ENCODE measurements at regions of chr11 and their contacts with region 1.

Region 1: DNA sequence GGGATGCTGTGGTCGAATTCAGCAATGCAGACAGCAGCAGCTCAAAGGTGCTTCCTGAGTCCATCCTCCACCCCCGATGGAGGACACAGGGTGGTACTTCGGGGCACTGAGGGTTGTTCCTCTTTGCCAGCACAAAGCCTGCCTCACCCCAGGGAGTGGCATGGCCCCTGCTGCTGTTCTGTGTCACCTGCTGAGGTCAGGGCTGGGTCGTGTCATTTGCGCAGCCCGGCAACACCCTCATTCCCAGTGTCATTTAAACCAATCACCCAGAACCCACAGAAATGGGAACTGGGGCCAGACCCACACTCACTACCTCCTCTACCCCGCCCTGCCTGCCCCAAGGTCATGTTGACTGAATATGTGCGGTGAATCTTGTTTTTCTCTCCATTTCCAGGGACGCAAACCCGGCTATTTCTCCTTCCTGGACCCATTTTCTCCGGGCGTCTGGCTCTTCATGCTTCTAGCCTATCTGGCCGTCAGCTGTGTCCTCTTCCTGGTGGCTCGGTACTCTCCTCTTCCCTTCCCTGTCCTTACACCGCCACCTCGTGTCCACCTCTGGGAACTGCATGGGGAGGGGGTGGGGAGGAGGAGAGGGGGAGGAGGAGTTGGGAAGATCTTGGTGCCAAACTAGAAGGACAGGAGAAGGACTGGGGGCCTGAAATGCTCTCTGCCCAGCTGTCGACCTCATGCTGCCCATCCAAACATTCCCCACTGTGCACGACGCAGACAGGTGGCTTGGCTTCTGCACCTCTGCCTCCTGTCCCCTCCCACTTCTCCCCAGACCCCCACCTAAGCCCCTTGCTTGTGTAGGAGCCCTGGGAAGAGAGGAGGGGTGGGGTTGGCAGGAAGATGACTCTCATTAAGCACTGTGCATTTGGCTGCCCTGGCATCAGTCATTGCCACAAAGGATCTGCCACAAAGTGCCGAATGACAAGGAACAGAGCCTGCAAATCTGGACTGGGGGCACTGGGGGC is 71.2 kb upstream of the TBCEL start:
- DNase-seq: peak; percentile 94
- ATAC-seq: peak; percentile 84
- H3K4me3 Mint-ChIP-seq: no peak overlapping the region
- H3K27ac Mint-ChIP-seq: no peak overlapping the region
- H3K4me1 Mint-ChIP-seq: peaks cover 40% of the 10 kb centered on the region
- H3K27me3 Mint-ChIP-seq: no peaks in the 10 kb centered on the region
- CTCF ChIP-seq: peak; percentile 71

Region 2: GRCh38 chr11:120832481-120833238 is 120.1 kb before region 1 on chr11:
- CTCF ChIA-PET with region 1: interaction called, 10 read pairs
- POLR2A ChIA-PET with region 1: no interaction called
- DNase-seq: no peak
- ATAC-seq: peak; percentile 46
- H3K4me3 Mint-ChIP-seq: no peak overlapping the region
- H3K27ac Mint-ChIP-seq: no peak overlapping the region
- H3K4me1 Mint-ChIP-seq: peaks cover 10% of the 10 kb centered on the region
- H3K27me3 Mint-ChIP-seq: no peaks in the 10 kb centered on the region
- CTCF ChIP-seq: no peak

Region 3: DNA sequence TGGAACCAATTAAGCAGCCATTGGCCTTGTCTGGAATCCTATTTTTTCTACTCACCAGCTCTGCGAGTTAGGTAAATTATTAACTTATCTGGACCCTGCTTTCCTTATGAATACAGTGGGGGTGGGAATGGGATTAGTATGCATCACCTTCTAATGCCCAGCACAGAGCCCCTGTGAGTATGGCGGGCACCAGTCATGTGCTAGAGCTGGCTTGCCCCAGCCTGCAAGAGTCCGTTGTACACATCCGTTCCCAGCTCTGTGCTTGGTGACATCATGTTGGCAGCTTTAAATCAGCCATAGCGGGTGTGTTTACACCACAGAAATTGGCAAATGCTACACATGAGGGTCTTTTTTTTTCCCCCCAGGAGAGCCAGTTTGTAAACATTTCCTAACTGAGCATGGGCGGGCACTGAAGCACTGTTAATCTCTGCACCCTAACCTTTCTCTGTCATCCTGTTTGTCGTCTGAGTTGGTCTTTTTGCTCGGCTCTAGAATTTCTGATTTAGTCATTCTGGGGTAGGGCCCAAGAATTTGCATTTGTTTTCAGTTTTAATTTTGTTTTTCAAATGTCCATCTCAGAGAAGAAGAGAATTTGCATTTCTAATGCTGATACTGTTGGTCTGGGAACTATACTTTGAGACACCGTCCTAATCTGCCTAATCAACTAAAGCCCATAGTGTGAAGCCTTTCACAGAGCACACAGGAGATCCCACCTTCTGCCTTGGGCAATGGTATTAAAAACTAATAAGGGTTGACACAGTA is 59.1 kb before region 1 on chr11:
- CTCF ChIA-PET with region 1: no interaction called
- POLR2A ChIA-PET with region 1: no interaction called
- DNase-seq: no peak
- ATAC-seq: no peak
- H3K4me3 Mint-ChIP-seq: no peak overlapping the region
- H3K27ac Mint-ChIP-seq: no peak overlapping the region
- H3K4me1 Mint-ChIP-seq: peaks cover 15% of the 10 kb centered on the region
- H3K27me3 Mint-ChIP-seq: no peaks in the 10 kb centered on the region; the same call in 1 of the 2 replicates
- CTCF ChIP-seq: no peak

Region 4: DNA sequence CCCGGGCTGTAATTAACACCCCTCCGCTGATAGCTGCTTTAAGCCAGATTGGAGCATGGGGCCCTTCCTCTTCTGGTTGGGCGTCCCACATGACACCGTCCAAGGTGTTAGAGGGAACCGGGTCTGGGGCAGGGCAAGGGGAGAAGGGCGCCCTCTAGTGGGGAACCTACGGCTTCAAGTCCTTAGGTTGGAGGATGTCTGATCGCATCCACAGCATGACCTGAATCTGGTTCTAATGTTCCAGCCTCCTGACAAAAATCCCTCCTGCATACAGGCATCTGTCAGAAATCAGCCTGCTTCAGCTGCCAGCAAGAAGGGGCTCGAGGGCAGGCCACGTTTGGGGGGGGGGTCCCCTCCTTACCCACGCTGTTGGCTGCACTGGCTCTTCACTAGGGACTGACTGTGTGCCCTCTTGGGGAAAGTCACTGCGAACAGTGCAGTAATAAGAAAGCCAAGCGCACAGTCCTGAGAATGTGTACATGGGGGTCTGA is 23.0 kb before region 1 on chr11:
- CTCF ChIA-PET with region 1: interaction called, 26 read pairs
- POLR2A ChIA-PET with region 1: no interaction called
- DNase-seq: peak; percentile 84
- ATAC-seq: peak; percentile 88
- H3K4me3 Mint-ChIP-seq: no peak overlapping the region
- H3K27ac Mint-ChIP-seq: no peak overlapping the region
- H3K4me1 Mint-ChIP-seq: peaks cover 21% of the 10 kb centered on the region
- H3K27me3 Mint-ChIP-seq: no peaks in the 10 kb centered on the region
- CTCF ChIP-seq: peak; percentile 83

Region 5: DNA sequence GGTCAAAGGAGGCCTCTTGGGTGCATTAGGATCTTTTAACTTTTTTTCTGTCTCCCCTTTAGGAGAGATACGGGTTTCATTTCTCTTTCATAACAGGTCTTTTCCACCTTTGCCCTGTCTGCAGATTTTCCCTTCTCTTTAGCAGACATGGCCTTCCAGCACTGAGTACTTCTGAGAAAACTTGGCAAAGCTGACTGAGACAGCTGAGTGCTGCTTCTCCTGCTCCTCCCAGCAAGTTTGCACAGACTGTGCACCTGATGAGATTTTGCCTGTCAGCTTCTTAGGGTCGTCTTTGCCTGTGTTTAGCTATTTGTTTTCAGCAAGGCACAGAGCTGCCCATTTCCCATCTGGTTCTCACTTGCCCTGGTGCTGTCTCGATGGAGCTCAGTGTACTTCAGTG is 16.4 kb before region 1 on chr11:
- CTCF ChIA-PET with region 1: interaction called, 21 read pairs
- POLR2A ChIA-PET with region 1: no interaction called
- DNase-seq: no peak
- ATAC-seq: no peak
- H3K4me3 Mint-ChIP-seq: no peak overlapping the region
- H3K27ac Mint-ChIP-seq: no peak overlapping the region; the same call in 1 of the 2 replicates
- H3K4me1 Mint-ChIP-seq: peaks cover 35% of the 10 kb centered on the region
- H3K27me3 Mint-ChIP-seq: no peaks in the 10 kb centered on the region
- CTCF ChIP-seq: no peak

Region 6: GRCh38 chr11:121194731-121195596 is 242.2 kb after region 1 on chr11:
- CTCF ChIA-PET with region 1: interaction called, 10 read pairs
- POLR2A ChIA-PET with region 1: no interaction called
- DNase-seq: peak; percentile 49
- ATAC-seq: peak; percentile 86
- H3K4me3 Mint-ChIP-seq: no peak overlapping the region
- H3K27ac Mint-ChIP-seq: no peak overlapping the region
- H3K4me1 Mint-ChIP-seq: peaks cover 48% of the 10 kb centered on the region
- H3K27me3 Mint-ChIP-seq: no peaks in the 10 kb centered on the region
- CTCF ChIP-seq: peak; percentile 90